PC-3 (cell line): ENCODE measurements at regions of chr18 and their contacts with region 1.

Region 1: GRCh38 chr18:11696451-11696850 is 7.4 kb downstream of the GNAL start:
- DNase-seq: no peak
- ATAC-seq: no peak
- H3K4me3 ChIP-seq: no peak overlapping the region
- H3K27ac ChIP-seq: no peak overlapping the region
- H3K4me1 ChIP-seq: no peaks in the 10 kb centered on the region
- H3K27me3 ChIP-seq: peaks cover 92% of the 10 kb centered on the region
- CTCF ChIP-seq: no peak

Region 2: DNA sequence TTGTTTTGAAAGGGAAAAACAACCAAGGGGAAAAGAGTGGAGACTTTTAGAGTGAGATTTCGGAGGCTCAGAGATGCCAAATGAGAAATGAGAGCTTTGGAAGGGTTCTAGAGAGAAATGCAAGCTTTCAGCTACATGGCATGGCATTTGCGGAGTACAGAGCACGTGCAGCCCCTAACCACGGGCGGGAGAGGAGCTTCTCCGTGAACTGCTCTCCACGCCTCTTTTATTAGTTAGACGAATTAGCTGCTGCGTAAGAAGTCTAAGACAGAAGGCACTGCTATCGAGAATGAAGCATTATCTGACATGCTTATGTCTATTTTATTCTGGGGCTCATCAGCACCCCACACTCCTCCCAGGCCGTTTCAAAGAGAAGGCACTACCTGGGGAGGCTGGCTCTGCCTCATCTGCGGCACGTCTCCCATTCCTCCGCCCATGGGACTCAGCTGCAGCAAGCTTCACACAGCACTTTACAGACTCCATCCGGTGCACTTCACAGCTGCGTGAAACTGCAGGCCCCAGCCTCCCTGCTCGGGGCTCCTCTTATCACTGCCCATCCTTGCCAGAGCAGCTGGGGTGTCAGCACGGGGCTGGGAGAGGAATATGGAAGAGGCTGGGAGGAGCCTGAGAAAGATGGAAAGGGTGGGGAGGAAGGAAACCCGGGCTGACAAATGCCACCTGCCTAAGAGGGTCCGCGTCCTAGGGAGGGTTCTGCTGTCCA is 1449.3 kb before region 1 on chr18:
- CTCF ChIA-PET with region 1: no interaction called
- POLR2A ChIA-PET with region 1: interaction called, 27 read pairs
- intact Hi-C with region 1: no loop called
- DNase-seq: no peak
- ATAC-seq: no peak
- H3K4me3 ChIP-seq: no peak overlapping the region
- H3K27ac ChIP-seq: no peak overlapping the region
- H3K4me1 ChIP-seq: no peaks in the 10 kb centered on the region
- H3K27me3 ChIP-seq: peaks cover 74% of the 10 kb centered on the region
- CTCF ChIP-seq: no peak